Psoas muscle (tissue), 8 donors: ENCODE measurements at regions of chr4 and their contacts with region 1.

Region 1: DNA sequence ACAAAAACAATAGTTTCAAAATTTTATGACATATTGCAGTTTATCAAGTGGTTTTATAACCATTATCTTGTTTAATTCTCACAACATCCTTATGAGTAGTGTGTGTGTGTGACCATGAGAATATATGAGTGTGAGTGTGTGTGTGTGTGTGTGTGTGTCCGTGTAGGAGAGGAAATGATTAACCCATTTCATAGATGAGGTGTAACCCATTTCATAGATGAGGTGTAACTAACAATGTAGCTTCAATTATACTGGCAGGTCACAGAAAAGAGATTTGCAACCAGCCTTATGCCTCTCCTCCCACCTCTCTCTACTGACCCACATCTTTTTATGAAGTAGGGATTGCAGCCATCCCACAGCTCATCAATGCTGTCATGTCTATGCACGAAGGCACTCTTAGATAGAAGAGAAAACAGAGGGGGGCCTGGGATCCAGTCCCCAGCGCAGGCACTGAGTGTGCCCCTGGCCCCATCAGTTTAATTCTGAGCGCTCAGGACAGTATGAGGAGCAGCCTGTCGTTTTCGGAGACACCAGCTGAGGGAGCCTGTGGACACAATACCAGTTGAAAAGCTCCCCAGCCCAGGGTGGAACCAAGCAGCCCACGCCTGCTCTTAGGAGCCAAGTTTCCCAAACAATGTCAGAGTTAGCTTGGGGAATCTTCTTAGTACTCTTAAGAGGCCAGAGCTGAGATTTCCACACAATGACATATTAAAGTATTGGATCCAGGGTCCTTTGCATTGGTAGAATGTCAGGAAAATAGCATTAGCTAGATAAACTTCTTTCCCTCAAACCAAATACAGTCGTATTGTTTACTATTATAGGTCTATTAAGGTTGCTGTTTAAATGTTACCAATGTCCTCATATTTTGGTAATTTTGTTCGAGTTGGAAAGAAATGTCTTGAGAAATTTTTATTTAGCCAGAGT is 88.6 kb downstream of the PALLD start:
- DNase-seq: peak; percentile 80 to 85
- ATAC-seq: peak; percentile 88 to 95 (median 92)
- H3K4me3 ChIP-seq: no peak overlapping the region
- H3K27ac ChIP-seq: no peak overlapping the region
- H3K4me1 ChIP-seq: peaks cover 18% of the 10 kb centered on the region
- H3K27me3 ChIP-seq: no peaks in the 10 kb centered on the region
- CTCF ChIP-seq: peak; percentile 77

Region 2: DNA sequence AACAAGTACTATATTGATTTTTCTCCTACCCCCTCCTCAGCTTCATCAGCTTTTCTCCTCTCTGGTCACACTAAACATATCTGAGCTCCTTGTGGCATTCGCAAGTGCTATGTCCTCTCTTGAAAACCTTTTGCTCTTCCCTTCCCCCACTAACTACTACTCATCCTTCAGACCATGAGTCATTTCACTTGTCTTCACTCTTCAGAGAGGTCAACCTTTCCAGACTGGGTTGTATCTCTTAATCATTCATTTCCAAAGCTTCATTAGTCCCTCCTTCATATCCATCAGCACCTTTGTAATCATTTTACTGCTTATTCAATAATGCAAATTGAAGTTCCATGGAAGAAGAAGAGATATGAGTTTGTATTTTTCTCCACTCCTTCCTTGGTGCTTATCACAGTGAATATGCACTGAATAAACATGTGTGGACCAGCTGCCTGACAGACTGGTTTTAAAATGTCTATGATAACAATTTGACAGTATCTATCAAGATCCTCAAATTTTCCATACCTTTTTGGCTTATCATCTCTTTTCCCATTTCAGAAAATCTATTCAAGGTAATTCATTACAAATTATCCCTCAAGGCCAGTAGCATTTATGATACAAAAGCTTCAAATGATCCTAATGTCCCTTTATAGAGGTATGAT is 133.6 kb before region 1 on chr4:
- intact Hi-C with region 1: no loop called
- DNase-seq: no peak
- ATAC-seq: peak in 3 of 4 donors; percentile 82 to 92 (median 88)
- H3K4me3 ChIP-seq: no peak overlapping the region
- H3K27ac ChIP-seq: peak overlapping the region; percentile 10
- H3K4me1 ChIP-seq: peaks cover 10% of the 10 kb centered on the region
- H3K27me3 ChIP-seq: no peaks in the 10 kb centered on the region
- CTCF ChIP-seq: no peak

Region 3: DNA sequence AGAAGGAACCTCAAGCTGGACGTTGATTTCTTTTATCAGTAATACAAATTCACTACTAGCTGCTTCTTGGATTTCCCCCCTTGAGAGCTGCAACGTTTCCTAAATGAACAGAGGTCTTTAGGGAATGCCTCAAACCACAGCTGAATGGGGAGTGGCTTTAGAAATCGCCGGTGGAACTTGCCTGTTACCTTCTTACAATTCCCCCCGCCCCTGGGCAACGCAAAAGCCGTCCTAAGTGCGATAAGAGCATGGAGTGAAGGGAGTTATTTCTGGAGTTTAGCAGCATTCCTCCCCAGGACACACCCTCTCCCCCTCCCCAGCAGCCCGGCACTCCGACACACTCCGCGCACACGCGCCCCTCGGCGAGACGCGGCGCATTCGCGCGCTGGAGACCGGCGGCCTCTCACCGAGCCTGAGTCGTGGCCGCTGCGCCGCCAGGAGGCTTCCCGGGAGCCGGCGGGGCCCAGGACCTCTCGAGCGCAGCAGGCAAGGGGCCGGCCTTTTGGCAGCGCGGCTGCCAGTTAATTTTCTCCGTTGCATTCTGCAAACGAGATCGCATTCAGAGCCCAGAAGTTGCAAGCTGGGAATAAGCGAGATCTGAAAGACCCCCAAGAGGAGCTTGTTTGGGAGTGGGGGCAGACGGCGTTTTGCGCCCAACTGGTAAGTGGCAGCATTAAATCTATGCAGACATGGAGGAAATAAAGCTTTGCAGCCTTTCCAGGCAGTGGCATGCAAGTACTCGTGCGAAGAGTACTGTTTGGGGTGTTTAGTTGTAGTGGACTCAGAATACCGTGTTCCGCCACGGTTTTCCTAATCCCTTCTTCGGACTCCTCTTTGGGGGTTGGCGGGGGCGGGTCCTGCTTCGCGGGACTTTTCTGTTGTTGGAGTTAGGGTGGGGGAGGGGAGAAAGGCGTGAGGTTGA is 46.1 kb after region 1 on chr4:
- intact Hi-C with region 1: loop called (anchors 5 kb)
- DNase-seq: peak; percentile 69 to 82
- ATAC-seq: peak; percentile 86 to 90 (median 88)
- H3K4me3 ChIP-seq: peak overlapping the region; percentile 85
- H3K27ac ChIP-seq: peak overlapping the region; percentile 77
- H3K4me1 ChIP-seq: peaks cover 46% of the 10 kb centered on the region
- H3K27me3 ChIP-seq: no peaks in the 10 kb centered on the region
- CTCF ChIP-seq: peak; percentile 52

Region 4: GRCh38 chr4:168679397-168680192 is 94.2 kb after region 1 on chr4:
- intact Hi-C with region 1: loop called (anchors 10 kb)
- DNase-seq: no peak
- ATAC-seq: no peak
- H3K4me3 ChIP-seq: no peak overlapping the region
- H3K27ac ChIP-seq: no peak overlapping the region
- H3K4me1 ChIP-seq: peaks cover 6% of the 10 kb centered on the region
- H3K27me3 ChIP-seq: no peaks in the 10 kb centered on the region
- CTCF ChIP-seq: no peak

Region 5: DNA sequence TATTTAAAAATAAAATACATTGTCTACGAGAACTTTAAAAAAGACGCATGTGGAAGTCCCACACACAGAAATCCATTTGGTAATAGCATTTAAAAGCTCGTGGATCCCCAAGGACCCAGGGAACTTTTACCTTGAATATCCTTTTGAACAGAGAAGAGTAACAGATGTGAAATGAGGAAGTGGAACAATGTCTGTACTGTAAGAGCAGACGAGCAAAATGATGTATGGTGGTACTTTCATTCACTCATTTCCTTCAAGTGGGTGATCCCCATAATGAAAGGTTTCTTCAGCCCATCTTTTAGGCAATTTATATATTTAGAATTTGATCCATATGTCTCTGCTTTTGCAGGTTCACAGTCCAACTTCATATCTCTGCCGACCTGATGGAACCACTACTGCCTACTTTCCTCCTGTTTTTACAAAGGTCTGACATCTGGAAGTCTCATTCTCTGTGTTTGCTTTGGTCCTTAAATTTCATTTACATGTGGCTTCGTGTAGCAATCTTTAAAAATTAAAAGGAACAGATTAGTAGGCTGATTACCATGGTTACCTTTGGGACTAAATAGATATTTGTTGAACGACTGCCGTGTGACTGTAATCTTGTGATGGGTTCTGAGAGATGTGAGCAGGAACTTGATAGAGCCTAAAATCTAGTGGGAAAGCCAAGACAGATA is 99.8 kb after region 1 on chr4:
- intact Hi-C with region 1: loop called in 1 of 2 experiments (anchors 10 kb)
- DNase-seq: no peak
- ATAC-seq: no peak
- H3K4me3 ChIP-seq: no peak overlapping the region
- H3K27ac ChIP-seq: no peak overlapping the region
- H3K4me1 ChIP-seq: no peaks in the 10 kb centered on the region
- H3K27me3 ChIP-seq: no peaks in the 10 kb centered on the region
- CTCF ChIP-seq: no peak

Region 6: GRCh38 chr4:168893807-168894206 is 308.4 kb after region 1 on chr4:
- intact Hi-C with region 1: no loop called
- DNase-seq: no peak
- ATAC-seq: peak; percentile 80 to 93 (median 85)
- H3K4me3 ChIP-seq: no peak overlapping the region
- H3K27ac ChIP-seq: no peak overlapping the region
- H3K4me1 ChIP-seq: peaks cover 27% of the 10 kb centered on the region
- H3K27me3 ChIP-seq: no peaks in the 10 kb centered on the region
- CTCF ChIP-seq: no peak

Region 7: DNA sequence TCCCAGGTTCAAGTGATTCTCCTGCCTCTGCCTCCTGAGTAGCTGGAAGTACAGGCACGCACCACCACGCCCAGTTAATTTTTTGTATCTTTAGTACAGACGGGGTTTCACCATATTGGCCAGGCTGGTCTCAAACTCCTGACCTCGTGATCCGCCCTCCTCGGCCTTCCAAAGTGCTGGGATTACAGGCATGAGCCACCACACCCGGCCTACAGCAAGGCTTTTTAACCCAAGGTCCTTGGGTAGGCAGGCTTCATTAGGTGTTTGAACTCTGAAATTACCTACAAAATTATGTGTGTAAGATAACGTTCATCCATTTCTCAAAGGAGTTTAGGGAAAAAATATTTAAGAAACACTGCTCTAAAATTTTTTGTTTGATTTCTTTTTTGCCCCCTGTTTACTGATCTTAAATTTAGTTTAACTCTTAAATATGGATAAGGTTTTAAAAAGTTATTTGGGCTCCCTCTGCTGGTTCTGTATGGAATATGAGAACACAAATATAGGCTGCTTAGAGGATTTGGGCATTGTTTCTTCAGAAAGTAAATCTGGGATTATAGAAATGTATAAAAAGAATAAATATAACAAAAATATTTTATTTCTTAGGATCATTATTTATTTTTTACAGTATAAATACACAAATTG is 331.8 kb after region 1 on chr4:
- intact Hi-C with region 1: loop called in 1 of 2 experiments (anchors 5 kb)
- DNase-seq: no peak
- ATAC-seq: peak in 2 of 4 donors; percentile 50 to 59
- H3K4me3 ChIP-seq: no peak overlapping the region
- H3K27ac ChIP-seq: peak overlapping the region; percentile 46
- H3K4me1 ChIP-seq: no peaks in the 10 kb centered on the region
- H3K27me3 ChIP-seq: no peaks in the 10 kb centered on the region
- CTCF ChIP-seq: peak; percentile 70